Stomach (tissue), 19 donors: ENCODE measurements at regions of chr1 and their contacts with region 1.

Region 1: DNA sequence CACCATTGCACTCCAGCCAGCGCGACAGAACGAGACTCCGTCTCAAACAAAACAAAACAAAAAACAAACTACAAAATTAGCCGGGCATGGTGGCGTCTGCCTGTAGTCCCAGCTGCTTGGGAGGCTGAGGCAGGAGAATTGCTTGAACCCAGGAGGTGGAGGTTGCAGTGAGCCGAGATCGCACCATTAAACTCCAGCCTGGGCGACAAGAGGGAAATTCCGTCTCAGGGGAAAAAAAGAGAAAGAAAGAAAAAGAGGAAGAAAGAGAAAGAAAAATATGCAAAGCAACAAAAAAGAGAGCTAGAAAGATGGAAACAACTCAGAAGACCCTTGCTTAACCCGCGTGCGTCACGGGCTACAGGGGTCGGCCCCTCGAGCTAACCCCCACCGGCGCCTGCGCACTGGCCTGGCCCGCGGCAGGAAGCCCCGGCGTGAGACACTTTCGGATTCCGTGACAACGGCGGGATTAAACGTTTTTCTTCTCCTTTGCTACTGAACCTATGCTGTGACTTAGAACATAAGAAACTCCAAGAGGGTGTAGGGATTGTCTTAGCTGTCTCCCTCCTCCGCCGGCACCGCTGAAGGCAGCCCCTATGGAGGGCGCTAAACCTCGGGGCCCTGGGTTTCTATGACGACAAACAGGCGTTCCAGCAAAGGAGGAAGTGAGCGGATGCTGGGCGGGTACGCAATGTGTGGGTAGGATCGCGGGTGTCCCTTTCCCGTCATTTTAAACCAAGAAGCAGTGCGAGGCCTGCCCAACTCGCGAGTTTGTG is at the start of gene AXDND1:
- DNase-seq: peak; percentile 82 to 96
- H3K4me3 ChIP-seq: peak within 1 kb of the TSS; percentile 58 to 79 (median 66)
- H3K27ac ChIP-seq: peak within 1 kb of the TSS; percentile 92 to 96 (median 93)
- H3K4me1 ChIP-seq: peaks cover 5 to 10% (median 8%) of the 10 kb centered on the region in 4 donors
- H3K27me3 ChIP-seq: no peaks in the 10 kb centered on the region
- CTCF ChIP-seq: peak in 1 of 7 experiments; percentile 5
- EP300 ChIP-seq: no peak
- POLR2A ChIP-seq: no peak
- total RNA-seq, gene AXDND1: 1.2 to 18.4 (median 3.2) TPM in 3 of 5 donors, not detected in the others

Region 2: GRCh38 chr1:179081687-179082332 is 283.7 kb before region 1 on chr1 and contains the start of gene TOR3A:
- intact Hi-C with region 1: loop called (anchors 5 kb)
- DNase-seq: peak; percentile 94 to 97
- H3K4me3 ChIP-seq: peak within 1 kb of the TSS; percentile 77 to 93 (median 84)
- H3K27ac ChIP-seq: peak within 1 kb of the TSS; percentile 79 to 94 (median 93)
- H3K4me1 ChIP-seq: peaks cover 17 to 37% (median 25%) of the 10 kb centered on the region in 4 donors
- H3K27me3 ChIP-seq: no peaks in the 10 kb centered on the region
- CTCF ChIP-seq: no peak
- EP300 ChIP-seq: no peak
- POLR2A ChIP-seq: peak in 2 of 4 donors; percentile 13 to 47
- total RNA-seq, gene TOR3A: 5.3 to 285 (median 32.1) TPM

Region 3: DNA sequence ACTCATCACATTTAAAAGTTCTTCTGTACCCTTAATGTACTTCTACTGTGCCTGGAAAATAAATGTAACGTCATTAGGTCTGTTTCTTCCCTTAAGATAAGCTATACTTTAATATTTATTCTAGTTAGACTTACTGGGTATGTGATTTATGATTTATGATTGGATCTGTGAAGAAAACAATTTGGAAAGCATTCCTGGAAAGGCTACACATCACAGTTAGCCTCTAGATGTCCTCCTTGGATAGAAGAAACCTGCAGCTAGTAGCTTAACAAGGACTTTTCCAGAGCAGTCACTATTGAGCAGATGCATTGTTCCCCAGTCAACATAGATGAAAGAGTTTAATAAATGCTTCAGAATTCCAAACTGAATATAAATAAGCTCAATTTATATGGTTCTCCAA is 113.8 kb before region 1 on chr1:
- intact Hi-C with region 1: loop called (anchors 10 kb)
- DNase-seq: peak in 1 of 2 donors; percentile 79
- H3K4me3 ChIP-seq: no peak overlapping the region
- H3K27ac ChIP-seq: no peak overlapping the region
- H3K4me1 ChIP-seq: no peaks in the 10 kb centered on the region
- H3K27me3 ChIP-seq: no peaks in the 10 kb centered on the region
- CTCF ChIP-seq: peak in 3 of 7 experiments; percentile 28 to 71 (median 45)
- EP300 ChIP-seq: no peak
- POLR2A ChIP-seq: no peak

Region 4: DNA sequence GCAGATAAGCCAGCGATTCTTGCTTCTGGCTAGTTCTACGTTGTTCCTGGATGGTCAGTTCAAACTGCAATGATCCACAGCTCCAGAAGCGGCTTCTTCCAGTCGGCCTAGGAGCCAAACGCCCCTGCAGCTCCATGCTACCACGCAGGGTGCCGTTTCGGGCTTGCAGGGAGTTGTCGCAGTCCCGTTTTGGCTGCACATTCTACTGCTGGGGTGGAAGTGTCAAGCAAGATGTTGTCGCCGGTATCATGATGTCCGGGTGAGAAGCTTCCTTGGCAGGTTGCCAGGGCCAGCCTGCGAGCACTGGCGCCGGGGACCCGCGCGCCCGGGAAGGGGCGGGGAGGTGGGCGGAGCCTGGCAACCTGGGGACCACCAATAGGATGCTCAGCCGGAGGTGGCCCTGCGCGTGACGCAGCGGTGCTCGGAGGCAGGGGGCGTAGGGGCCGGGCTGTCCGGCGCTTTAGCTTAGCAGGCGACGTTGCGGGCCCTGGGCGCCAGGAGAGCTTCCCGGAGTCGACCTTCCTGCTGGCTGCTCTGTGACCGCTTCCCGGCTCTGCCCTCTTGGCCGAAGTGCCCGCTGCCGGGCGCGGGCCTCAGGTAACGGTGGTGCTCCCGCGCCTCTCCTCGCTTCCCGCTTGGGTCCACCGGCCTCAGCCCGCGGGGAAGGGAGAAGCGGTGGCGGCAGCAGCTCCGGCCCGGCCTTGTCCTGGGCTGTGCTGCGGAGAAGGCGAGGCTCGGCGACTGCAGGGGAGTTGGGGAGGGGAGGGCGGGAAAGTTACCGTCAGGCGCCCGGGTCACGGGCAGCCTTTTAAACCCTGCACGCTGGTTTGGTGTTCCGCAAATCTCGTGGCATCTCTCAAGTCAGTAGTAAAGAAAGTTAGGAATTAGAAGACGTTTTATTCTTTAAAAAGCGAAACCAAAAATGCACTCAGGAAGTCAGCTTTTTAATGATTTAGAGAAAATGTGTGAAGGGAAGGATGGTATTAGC is 71.9 kb before region 1 on chr1 and contains the start of gene SOAT1:
- intact Hi-C with region 1: loop called (anchors 10 kb)
- DNase-seq: peak; percentile 90 to 97
- H3K4me3 ChIP-seq: peak within 1 kb of the TSS; percentile 70 to 83 (median 80)
- H3K27ac ChIP-seq: peak within 1 kb of the TSS; percentile 92 to 97 (median 96)
- H3K4me1 ChIP-seq: peaks cover 30 to 66% (median 40%) of the 10 kb centered on the region in 4 donors
- H3K27me3 ChIP-seq: no peaks in the 10 kb centered on the region
- CTCF ChIP-seq: peak in 4 of 7 experiments; percentile 2 to 23 (median 9)
- EP300 ChIP-seq: no peak
- POLR2A ChIP-seq: peak in 2 of 4 donors; percentile 33 to 55
- total RNA-seq, gene SOAT1: 2.9 to 179 (median 10.7) TPM